Mammary epithelial cell (primary cell): ENCODE measurements at regions of chr1 and their contacts with region 1.

Region 1: GRCh38 chr1:161399257-161399998 is 31.8 kb upstream of the CFAP126 start:
- DNase-seq: peak; percentile 87
- H3K4me3 ChIP-seq: peak overlapping the region; percentile 64 to 97 (median 66)
- H3K27ac ChIP-seq: peak overlapping the region; percentile 89
- H3K4me1 ChIP-seq: peaks cover 3% of the 10 kb centered on the region
- H3K27me3 ChIP-seq: no peaks in the 10 kb centered on the region
- CTCF ChIP-seq: peak in 1 of 2 donors; percentile 61

Region 2: DNA sequence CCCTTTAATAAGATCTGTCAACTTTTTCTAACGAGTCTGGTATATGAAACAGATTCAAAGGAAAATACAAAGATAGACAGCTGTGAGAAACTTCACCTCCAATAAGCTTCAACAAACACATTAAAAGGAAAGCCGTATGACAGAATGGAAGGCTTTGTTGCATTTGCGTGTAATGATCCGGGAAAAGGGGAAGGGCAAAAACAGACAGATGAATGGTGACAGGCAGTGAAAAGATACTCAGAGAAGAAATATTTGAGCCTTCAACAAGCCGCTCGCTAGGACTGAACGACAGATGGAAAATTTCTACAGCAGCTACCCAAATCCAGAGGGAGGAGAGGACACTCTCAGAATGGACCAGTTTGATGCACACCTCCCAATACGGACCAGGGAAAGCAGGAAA is 1071.2 kb before region 1 on chr1:
- CTCF ChIA-PET with region 1: no interaction called
- dilution Hi-C with region 1: no loop called
- in situ Hi-C with region 1: no loop called
- intact Hi-C with region 1: no loop called
- DNase-seq: no peak
- H3K4me3 ChIP-seq: no peak overlapping the region
- H3K27ac ChIP-seq: no peak overlapping the region
- H3K4me1 ChIP-seq: no peaks in the 10 kb centered on the region
- H3K27me3 ChIP-seq: no peaks in the 10 kb centered on the region
- CTCF ChIP-seq: no peak

Region 3: GRCh38 chr1:161080391-161081355 is 318.8 kb before region 1 on chr1:
- CTCF ChIA-PET with region 1: no interaction called
- dilution Hi-C with region 1: no loop called
- in situ Hi-C with region 1: no loop called
- intact Hi-C with region 1: no loop called
- DNase-seq: peak; percentile 72
- H3K4me3 ChIP-seq: no peak overlapping the region
- H3K27ac ChIP-seq: peak overlapping the region; percentile 69
- H3K4me1 ChIP-seq: peaks cover 63% of the 10 kb centered on the region
- H3K27me3 ChIP-seq: no peaks in the 10 kb centered on the region
- CTCF ChIP-seq: no peak

Region 4: DNA sequence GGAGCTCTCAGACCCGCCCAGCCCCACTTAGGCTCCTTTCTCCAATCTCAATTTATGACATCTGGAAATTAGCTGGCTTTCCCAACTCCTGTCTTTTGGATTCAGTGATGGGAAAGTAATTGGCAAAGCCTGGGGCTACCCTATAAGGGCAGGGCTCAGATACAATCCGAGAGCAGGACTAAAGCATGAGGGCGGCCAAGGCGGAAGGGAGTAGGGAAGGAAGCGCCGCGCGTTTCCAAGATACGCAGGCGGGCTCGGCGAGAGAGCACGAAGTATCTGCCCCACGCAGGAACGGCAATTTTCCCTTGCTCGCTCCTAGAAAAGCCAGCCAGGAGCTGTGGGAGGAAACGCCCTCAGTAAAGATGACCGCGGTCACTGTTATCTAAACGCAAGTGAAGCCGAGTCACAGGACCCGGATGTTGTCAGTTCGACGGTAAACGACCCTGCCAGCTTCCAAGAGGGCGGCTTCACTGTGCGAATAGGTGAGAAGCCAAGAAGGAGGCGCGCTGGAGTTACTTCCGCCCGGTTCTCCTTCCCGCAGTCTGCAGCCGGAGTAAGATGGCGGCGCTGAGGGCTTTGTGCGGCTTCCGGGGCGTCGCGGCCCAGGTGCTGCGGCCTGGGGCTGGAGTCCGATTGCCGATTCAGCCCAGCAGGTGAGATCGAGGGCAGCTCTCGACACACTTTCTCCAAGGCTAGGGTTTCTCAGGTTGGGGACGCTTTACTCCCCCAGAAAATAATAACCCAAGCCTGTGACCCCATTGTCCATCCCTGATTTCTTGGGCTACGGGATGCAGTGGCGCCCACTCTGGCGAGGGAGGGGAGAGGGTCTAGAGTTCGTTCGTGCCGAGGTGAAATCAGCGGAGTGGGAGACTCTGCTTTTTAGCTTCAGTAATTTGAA is 197.4 kb before region 1 on chr1 and contains the start of gene NDUFS2:
- CTCF ChIA-PET with region 1: no interaction called
- dilution Hi-C with region 1: loop called (anchors 25 kb)
- in situ Hi-C with region 1: no loop called
- intact Hi-C with region 1: no loop called
- DNase-seq: peak; percentile 97
- H3K4me3 ChIP-seq: peak within 1 kb of the TSS; percentile 71 to 89 (median 81)
- H3K27ac ChIP-seq: peak within 1 kb of the TSS; percentile 74
- H3K4me1 ChIP-seq: peaks cover 42% of the 10 kb centered on the region
- H3K27me3 ChIP-seq: no peaks in the 10 kb centered on the region
- CTCF ChIP-seq: peak in 1 of 2 donors; percentile 20
- total RNA-seq, gene NDUFS2: 69.3 to 82.6 TPM